ENCODE measurements at regions of chr12 and their contacts with region 1.

Region 1: DNA sequence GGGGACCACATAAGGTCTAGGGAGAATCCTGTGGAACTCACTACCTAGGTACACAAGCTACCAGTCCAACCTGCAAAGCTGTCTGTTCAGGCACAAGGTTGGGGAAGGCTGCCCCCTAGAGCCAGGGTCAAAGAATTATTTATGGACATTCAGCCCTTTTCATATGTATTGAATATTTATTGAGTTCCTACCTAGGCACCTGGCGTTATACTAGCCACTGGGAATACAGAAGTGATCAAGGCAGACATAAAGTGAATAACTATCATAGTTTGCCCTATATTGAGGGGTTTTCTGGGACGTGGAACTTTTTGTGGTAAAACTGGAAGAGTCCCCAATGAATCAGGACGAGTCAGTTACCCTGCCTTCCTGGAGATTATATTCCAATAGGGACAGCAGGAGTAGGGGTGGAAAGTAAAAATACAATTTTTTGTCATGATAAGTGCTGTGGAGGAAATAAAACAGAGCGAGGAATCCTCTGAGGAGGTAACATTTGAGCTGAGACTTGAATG is 5.8 kb upstream of the SLC48A1 start:
- DNase-seq: peak; percentile 85
- ATAC-seq: peak; percentile 87
- H3K4me3 Mint-ChIP-seq: no peak overlapping the region
- H3K27ac Mint-ChIP-seq: no peak overlapping the region
- H3K4me1 Mint-ChIP-seq: peaks cover 28% of the 10 kb centered on the region
- H3K27me3 Mint-ChIP-seq: peaks cover 7% of the 10 kb centered on the region

Region 2: GRCh38 chr12:47491516-47492305 is 275.6 kb before region 1 on chr12:
- CTCF ChIA-PET with region 1: no interaction called
- POLR2A ChIA-PET with region 1: no interaction called
- DNase-seq: no peak
- ATAC-seq: no peak
- H3K4me3 Mint-ChIP-seq: no peak overlapping the region
- H3K27ac Mint-ChIP-seq: no peak overlapping the region
- H3K4me1 Mint-ChIP-seq: no peaks in the 10 kb centered on the region
- H3K27me3 Mint-ChIP-seq: no peaks in the 10 kb centered on the region

Region 3: DNA sequence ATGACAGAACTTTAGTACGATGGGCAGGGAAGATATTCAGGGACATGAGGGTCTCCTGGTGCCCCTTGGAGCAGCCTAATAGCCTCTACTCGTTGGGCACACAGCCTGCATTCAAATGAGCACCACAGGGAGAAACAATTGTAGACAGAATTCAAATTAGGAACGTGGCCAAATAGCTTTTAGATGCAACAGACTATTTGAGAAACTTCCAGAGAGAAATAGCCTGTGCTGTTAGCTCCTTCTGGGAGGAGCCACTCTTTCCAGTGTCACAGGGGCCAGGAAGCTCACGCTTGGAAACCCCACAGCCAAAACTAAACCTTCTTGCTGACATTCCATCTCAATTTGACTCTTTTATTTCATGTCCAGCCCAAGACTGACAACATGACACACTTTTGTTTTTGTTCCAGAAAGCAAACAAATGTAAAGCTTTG is 175.9 kb before region 1 on chr12:
- CTCF ChIA-PET with region 1: no interaction called
- POLR2A ChIA-PET with region 1: no interaction called
- DNase-seq: no peak
- ATAC-seq: no peak
- H3K4me3 Mint-ChIP-seq: no peak overlapping the region
- H3K27ac Mint-ChIP-seq: no peak overlapping the region
- H3K4me1 Mint-ChIP-seq: peaks cover 4% of the 10 kb centered on the region
- H3K27me3 Mint-ChIP-seq: no peaks in the 10 kb centered on the region

Region 4: GRCh38 chr12:47705566-47706425 is 61.5 kb before region 1 on chr12 and contains the start of gene RPAP3:
- CTCF ChIA-PET with region 1: interaction called, 27 read pairs
- POLR2A ChIA-PET with region 1: interaction called, 3 read pairs
- DNase-seq: peak; percentile 98
- ATAC-seq: peak; percentile 96
- H3K4me3 Mint-ChIP-seq: peak within 1 kb of the TSS; percentile 92
- H3K27ac Mint-ChIP-seq: peak within 1 kb of the TSS; percentile 97
- H3K4me1 Mint-ChIP-seq: peaks cover 57% of the 10 kb centered on the region
- H3K27me3 Mint-ChIP-seq: no peaks in the 10 kb centered on the region
- total RNA-seq, gene RPAP3: 41.6 to 41.7 TPM

Region 5: DNA sequence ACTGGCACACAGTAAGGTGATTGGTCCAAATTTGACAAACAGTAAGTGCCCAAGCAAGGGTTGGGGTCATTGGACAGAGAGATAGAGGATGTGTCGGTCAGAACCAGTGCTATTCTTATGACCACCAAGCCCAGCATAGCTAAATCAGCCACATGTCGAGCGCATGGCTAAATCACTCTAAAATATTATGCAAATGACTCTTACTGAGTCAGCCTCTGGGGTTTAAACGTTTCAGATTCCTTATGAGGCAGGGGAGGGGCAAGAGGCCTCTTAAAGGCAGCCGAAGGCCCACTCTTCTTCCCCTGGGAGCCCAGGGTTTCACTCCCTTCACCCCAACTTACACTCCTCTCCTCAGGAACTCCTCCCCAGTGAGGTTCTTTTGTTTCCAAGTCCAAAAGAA is 41.4 kb before region 1 on chr12:
- CTCF ChIA-PET with region 1: interaction called, 15 read pairs
- POLR2A ChIA-PET with region 1: no interaction called
- DNase-seq: no peak
- ATAC-seq: no peak
- H3K4me3 Mint-ChIP-seq: no peak overlapping the region
- H3K27ac Mint-ChIP-seq: no peak overlapping the region
- H3K4me1 Mint-ChIP-seq: peaks cover 39% of the 10 kb centered on the region
- H3K27me3 Mint-ChIP-seq: no peaks in the 10 kb centered on the region

Region 6: DNA sequence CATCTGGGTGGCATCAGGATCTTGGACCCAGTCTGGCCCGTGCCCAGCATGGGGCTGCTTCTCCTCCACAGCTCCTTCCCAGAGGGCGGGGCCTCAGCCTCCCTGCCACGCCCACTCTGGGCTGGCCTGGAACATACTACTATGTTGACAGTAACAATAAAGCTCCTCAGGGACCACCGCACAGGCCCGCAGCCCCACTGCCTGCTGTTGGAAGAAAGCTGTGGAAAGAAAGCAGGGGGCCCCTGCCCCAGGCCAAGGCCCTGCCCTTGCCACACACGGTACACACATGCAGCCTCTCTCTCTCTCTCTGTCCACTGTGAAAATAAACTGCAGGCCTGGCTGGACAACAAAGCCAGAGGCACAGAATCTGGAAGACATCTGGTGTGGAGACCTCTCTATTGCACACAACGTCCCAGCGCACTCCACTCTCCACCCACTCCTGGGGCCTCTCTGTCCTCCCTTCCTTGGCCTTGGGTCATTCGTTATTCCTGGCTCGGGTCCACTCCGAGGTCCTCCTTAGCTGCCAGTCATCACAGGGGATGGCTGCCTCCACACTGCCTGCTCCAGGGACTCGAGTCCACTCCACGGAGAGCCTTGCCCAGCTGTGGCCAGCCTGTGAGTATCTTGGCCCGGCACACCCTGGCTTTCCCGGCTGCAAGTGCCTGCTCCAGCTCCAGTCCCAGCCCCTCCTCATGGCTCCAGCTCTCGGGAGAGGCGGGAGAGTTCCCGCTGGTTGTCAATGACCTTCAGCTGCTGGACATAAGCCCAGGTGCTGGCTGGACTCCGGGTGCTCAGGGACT is 30.2 kb before region 1 on chr12:
- CTCF ChIA-PET with region 1: interaction called, 646 read pairs
- POLR2A ChIA-PET with region 1: interaction called, 3 read pairs
- DNase-seq: no peak
- ATAC-seq: no peak
- H3K4me3 Mint-ChIP-seq: no peak overlapping the region
- H3K27ac Mint-ChIP-seq: no peak overlapping the region
- H3K4me1 Mint-ChIP-seq: peaks cover 19% of the 10 kb centered on the region
- H3K27me3 Mint-ChIP-seq: no peaks in the 10 kb centered on the region

Region 7: DNA sequence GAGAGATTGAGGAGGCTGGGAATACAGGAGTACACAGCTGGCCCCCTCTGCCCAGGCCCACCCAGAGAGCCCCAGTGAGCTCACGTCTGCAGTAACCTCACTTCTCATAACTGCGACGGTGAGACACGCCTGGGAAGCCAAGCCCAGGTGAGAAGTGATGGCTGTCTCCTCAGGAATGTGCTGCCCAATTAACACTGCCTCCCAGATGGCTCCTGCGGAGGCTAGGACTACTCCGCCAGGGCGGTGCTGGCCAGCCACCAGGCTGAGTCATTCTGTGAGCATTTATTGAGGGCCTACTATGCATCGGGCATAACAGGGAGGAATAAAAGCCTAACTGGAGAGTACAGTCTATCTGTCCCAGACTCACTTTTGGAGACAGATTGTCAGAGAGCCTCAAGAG is 186.8 kb after region 1 on chr12:
- CTCF ChIA-PET with region 1: no interaction called
- POLR2A ChIA-PET with region 1: no interaction called
- DNase-seq: no peak
- ATAC-seq: no peak
- H3K4me3 Mint-ChIP-seq: no peak overlapping the region
- H3K27ac Mint-ChIP-seq: no peak overlapping the region
- H3K4me1 Mint-ChIP-seq: peaks cover 15% of the 10 kb centered on the region
- H3K27me3 Mint-ChIP-seq: peaks cover 33% of the 10 kb centered on the region

Measured in activated CD8-positive, alpha-beta T cell treated with anti-CD3 and anti-CD28 coated beads, Interleukin-2, amount 10 ng/mL, durations not matched to agents 7 days and 5 days (primary cell).